Activated CD8-positive, alpha-beta memory T cell treated with anti-CD3 and anti-CD28 coated beads, Interleukin-2, amount 10 ng/mL, durations not matched to agents 7 days and 5 days (primary cell): ENCODE measurements at regions of chr17 and their contacts with region 1.

Region 1: GRCh38 chr17:78019367-78019975 is 61.0 kb downstream of the TNRC6C start:
- DNase-seq: no peak
- ATAC-seq: peak; percentile 54
- H3K4me3 Mint-ChIP-seq: peak overlapping the region; percentile 63
- H3K27ac Mint-ChIP-seq: peak overlapping the region; percentile 88
- H3K4me1 Mint-ChIP-seq: peaks cover 19% of the 10 kb centered on the region
- H3K27me3 Mint-ChIP-seq: no peaks in the 10 kb centered on the region

Region 2: DNA sequence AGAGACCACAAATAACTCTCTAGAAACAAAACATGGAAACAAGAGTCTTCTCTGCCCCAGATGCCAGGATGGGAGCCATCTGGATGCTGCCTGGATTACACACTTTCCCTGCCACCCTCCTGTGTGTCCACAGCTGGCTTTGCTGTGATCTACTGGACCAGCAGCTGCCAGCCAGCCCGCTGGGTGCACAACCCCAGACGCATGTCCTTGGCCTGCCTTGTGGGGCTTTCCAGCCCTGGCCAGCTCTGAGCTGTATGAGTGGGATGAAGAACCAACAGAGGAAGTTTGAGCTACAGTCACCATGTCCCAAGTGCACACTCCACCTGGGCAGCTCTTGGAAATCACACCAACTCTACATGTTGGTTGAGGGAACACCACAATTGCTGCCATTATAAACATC is 118.0 kb before region 1 on chr17:
- CTCF ChIA-PET with region 1: no interaction called
- DNase-seq: no peak
- ATAC-seq: no peak
- H3K4me3 Mint-ChIP-seq: no peak overlapping the region
- H3K27ac Mint-ChIP-seq: no peak overlapping the region
- H3K4me1 Mint-ChIP-seq: peaks cover 2% of the 10 kb centered on the region
- H3K27me3 Mint-ChIP-seq: peaks cover 16% of the 10 kb centered on the region

Region 3: DNA sequence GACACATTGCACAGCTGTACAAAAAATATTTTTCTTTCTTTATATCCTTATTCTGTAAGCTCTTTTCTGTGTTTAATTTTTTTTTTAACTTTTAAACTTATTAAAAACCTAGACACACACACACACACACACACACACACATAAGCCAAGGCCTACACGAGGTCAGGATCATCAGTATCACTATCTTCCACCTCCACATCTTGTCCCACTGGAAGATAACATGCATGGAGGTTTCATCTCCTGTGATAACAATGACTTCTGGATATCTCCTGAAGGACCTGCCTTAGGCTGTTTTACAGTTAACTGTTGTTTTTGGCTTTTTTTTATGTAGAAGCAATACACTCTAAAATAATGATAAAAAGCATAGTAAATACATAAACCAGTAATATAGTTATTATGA is 10.2 kb after region 1 on chr17:
- CTCF ChIA-PET with region 1: interaction called, 10 read pairs
- DNase-seq: no peak
- ATAC-seq: no peak
- H3K4me3 Mint-ChIP-seq: no peak overlapping the region
- H3K27ac Mint-ChIP-seq: no peak overlapping the region
- H3K4me1 Mint-ChIP-seq: peaks cover 7% of the 10 kb centered on the region
- H3K27me3 Mint-ChIP-seq: no peaks in the 10 kb centered on the region

Region 4: GRCh38 chr17:78072961-78073360 is 53.5 kb after region 1 on chr17:
- CTCF ChIA-PET with region 1: interaction called, 10 read pairs
- DNase-seq: no peak
- ATAC-seq: no peak
- H3K4me3 Mint-ChIP-seq: no peak overlapping the region
- H3K27ac Mint-ChIP-seq: no peak overlapping the region
- H3K4me1 Mint-ChIP-seq: no peaks in the 10 kb centered on the region
- H3K27me3 Mint-ChIP-seq: no peaks in the 10 kb centered on the region

Region 5: DNA sequence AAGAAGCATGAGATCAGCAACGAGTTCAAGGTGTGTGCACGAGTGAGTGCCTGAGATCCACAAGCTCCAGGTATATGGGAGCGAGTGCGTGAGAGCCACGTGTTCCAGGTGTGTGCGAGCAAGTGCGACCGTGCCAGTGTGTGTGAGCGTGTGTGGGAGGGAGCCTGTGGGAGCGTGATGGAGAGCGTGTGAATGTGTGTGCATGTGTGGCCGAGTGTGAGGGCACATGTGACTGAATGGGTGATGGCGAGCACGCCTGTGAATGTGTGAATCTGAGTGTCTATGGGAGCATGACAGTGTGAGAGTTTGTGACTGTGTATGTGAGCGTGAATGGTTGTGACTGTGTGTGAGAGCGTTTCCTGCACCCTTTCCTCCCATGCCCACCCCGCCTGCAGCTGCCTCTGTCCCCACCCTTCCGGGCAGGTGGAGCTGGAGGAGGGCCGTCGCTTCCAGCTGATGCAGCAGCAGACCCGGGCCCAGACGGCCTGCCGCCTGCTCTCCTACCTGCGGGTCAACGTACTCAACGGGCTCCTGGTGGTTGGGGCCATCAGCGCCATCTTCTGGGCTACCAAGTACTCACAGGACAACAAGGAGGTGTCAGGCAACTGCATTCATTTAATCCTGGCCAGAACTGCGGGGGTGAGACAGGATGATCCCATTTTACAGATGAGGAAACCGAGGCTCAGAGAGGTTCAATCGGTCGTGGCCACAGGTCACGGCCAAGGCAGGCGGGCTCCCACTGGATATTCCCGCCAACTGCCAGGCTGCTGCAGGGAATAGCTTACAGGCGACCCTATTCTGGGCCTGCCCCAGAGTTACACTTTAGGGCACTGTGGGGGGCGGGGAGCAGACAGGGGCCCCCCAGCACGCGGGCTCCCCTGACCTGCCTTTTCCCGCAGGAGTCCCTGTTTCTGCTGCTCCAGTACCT is 114.8 kb after region 1 on chr17:
- CTCF ChIA-PET with region 1: interaction called, 14 read pairs
- DNase-seq: peak; percentile 89
- ATAC-seq: peak; percentile 18
- H3K4me3 Mint-ChIP-seq: peak overlapping the region; percentile 72
- H3K27ac Mint-ChIP-seq: peak overlapping the region; percentile 81
- H3K4me1 Mint-ChIP-seq: peaks cover 76% of the 10 kb centered on the region
- H3K27me3 Mint-ChIP-seq: no peaks in the 10 kb centered on the region